Ascending aorta (tissue), 2 donors: ENCODE measurements at regions of chr18 and their contacts with region 1.

Region 1: DNA sequence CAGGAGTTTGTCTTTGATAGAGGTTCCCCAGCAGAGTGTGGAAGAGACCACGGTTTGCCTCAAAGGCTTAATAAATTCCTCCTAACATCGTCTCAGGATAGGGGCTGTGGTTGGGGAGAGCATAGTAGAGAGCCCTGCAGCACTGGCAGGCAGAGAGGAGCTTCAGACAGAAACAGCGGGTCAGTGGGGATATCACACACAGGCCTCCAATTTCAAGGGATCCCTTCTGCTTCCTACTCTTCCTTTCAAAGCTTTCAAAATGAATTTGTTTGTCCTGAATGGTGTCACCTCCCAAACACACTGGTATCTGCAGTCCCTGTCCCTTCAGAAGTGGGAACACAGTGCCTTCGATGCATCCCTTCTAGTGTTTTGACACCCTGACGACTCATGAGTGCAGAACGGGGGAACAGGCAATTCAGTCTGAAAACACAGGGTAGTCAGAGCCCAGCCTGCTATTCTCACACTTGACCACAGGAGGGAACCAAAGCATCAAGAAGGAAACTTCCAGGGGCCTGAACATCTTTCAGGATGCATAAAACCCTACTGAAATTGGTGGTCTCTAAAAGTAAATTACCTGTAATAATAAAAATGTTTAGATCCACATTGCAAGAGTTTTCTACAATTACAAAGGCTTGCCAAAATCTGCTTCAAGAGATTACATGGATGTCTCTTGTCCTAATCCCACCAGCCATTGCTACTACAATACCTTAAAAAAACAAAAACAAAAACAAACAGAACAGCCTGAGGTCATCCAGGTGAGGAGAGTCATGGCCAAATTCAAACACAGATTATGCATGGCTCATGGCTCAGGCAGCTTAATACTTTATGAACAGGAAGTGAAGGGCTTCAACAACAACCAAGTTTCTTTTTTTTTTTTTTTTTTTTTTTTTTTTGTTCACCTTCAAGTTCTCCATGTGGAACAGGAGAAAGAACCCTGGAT is 49.8 kb downstream of the SLC14A2 start:
- DNase-seq: peak in 1 of 2 donors; percentile 88
- H3K4me3 ChIP-seq: no peak overlapping the region
- H3K27ac ChIP-seq: no peak overlapping the region
- H3K4me1 ChIP-seq: peaks cover 8 to 25% of the 10 kb centered on the region in 2 donors
- H3K27me3 ChIP-seq: no peaks in the 10 kb centered on the region
- CTCF ChIP-seq: peak; percentile 90 to 99 (median 93)

Region 2: DNA sequence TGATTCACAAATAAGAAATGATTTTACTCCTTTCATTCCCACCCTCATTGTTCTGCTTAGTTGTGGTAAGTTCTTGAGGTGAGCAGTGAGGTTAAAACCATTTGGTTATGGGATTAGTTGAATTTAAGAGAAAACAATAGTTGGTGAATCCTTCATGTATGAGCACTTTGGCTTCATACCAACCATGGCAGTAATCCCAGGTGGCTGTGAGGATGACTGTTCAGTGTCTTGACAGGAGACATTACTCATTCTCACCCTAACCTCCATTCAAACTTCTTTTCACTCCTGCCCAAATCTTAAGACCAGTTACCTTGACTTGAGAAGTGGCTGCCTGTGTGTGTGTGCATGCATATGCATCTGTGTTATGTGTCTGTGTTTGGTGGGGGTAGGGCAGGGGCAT is 841.3 kb before region 1 on chr18:
- intact Hi-C with region 1: no loop called
- DNase-seq: no peak
- H3K4me3 ChIP-seq: no peak overlapping the region
- H3K27ac ChIP-seq: peak overlapping the region; percentile 7 to 22
- H3K4me1 ChIP-seq: peaks cover 3 to 32% of the 10 kb centered on the region in 2 donors
- H3K27me3 ChIP-seq: no peaks in the 10 kb centered on the region
- CTCF ChIP-seq: no peak

Region 3: GRCh38 chr18:45690975-45691815 is 26.1 kb after region 1 on chr18:
- intact Hi-C with region 1: loop called (anchors 2 kb)
- DNase-seq: peak in 1 of 2 donors; percentile 87
- H3K4me3 ChIP-seq: no peak overlapping the region
- H3K27ac ChIP-seq: no peak overlapping the region
- H3K4me1 ChIP-seq: no peaks in the 10 kb centered on the region
- H3K27me3 ChIP-seq: no peaks in the 10 kb centered on the region
- CTCF ChIP-seq: peak; percentile 82 to 88 (median 82)

Region 4: GRCh38 chr18:45839414-45840395 is 174.6 kb after region 1 on chr18:
- intact Hi-C with region 1: loop called (anchors 2 kb)
- DNase-seq: no peak
- H3K4me3 ChIP-seq: no peak overlapping the region
- H3K27ac ChIP-seq: no peak overlapping the region
- H3K4me1 ChIP-seq: peaks cover 2 to 14% of the 10 kb centered on the region in 2 donors
- H3K27me3 ChIP-seq: no peaks in the 10 kb centered on the region
- CTCF ChIP-seq: peak; percentile 53 to 72 (median 59)

Region 5: GRCh38 chr18:45879681-45880655 is 214.9 kb after region 1 on chr18:
- intact Hi-C with region 1: loop called (anchors 2 kb)
- DNase-seq: peak in 1 of 2 donors; percentile 80
- H3K4me3 ChIP-seq: no peak overlapping the region
- H3K27ac ChIP-seq: peak overlapping the region; percentile 22 to 48
- H3K4me1 ChIP-seq: no peaks in the 10 kb centered on the region
- H3K27me3 ChIP-seq: no peaks in the 10 kb centered on the region
- CTCF ChIP-seq: peak; percentile 91 to 100 (median 98)

Region 6: GRCh38 chr18:46073474-46074331 is 408.6 kb after region 1 on chr18:
- intact Hi-C with region 1: loop called (anchors 10 kb)
- DNase-seq: peak in 1 of 2 donors; percentile 69
- H3K4me3 ChIP-seq: peak overlapping the region in 1 of 2 donors; percentile 38
- H3K27ac ChIP-seq: no peak overlapping the region
- H3K4me1 ChIP-seq: peaks cover 4 to 8% of the 10 kb centered on the region in 2 donors
- H3K27me3 ChIP-seq: no peaks in the 10 kb centered on the region
- CTCF ChIP-seq: peak; percentile 37 to 69 (median 63)